ENCODE measurements at regions of chr4 and their contacts with region 1.

Region 1: GRCh38 chr4:143549928-143550327 is 36.4 kb downstream of the SMARCA5 start:
- DNase-seq: no peak
- ATAC-seq: no peak
- H3K4me3 ChIP-seq: no peak overlapping the region
- H3K4me3 Mint-ChIP-seq: no peak overlapping the region
- H3K27ac ChIP-seq: no peak overlapping the region
- H3K27ac Mint-ChIP-seq: no peak overlapping the region
- H3K4me1 ChIP-seq: no peaks in the 10 kb centered on the region
- H3K4me1 Mint-ChIP-seq: peaks cover 8% of the 10 kb centered on the region
- H3K27me3 ChIP-seq: no peaks in the 10 kb centered on the region
- H3K27me3 Mint-ChIP-seq: no peaks in the 10 kb centered on the region
- CTCF ChIP-seq: no peak

Region 2: GRCh38 chr4:143531380-143531779 is 18.5 kb before region 1 on chr4:
- CTCF ChIA-PET with region 1: interaction called, 3 read pairs
- POLR2A ChIA-PET with region 1: no interaction called
- intact Hi-C with region 1: loop called in 1 of 2 experiments (anchors 2 kb)
- DNase-seq: peak in 1 of 9 experiments; percentile 12
- ATAC-seq: no peak
- H3K4me3 ChIP-seq: no peak overlapping the region
- H3K4me3 Mint-ChIP-seq: no peak overlapping the region
- H3K27ac ChIP-seq: no peak overlapping the region
- H3K27ac Mint-ChIP-seq: no peak overlapping the region
- H3K4me1 ChIP-seq: no peaks in the 10 kb centered on the region
- H3K4me1 Mint-ChIP-seq: peaks cover 12% of the 10 kb centered on the region
- H3K27me3 ChIP-seq: no peaks in the 10 kb centered on the region
- H3K27me3 Mint-ChIP-seq: no peaks in the 10 kb centered on the region
- CTCF ChIP-seq: peak; percentile 15